Activated T-helper 2 cell treated with anti-CD3 and anti-CD28 coated beads, Interferon-gamma antibody, Interleukin-2, Interleukin-4, amounts not matched to agents 10 μg/mL and 5 μg/mL and 100 μg/mL, durations not matched to agents 14 hours and 24 hours and 36 hours (primary cell): ENCODE measurements at regions of chrX and their contacts with region 1.

Region 1: GRCh38 chrX:31099536-31100090 is 27.8 kb upstream of the FTHL17 start:
- DNase-seq: peak; percentile 9
- H3K4me3 Mint-ChIP-seq: no peak overlapping the region
- H3K27ac Mint-ChIP-seq: no peak overlapping the region
- H3K4me1 Mint-ChIP-seq: peaks cover 2% of the 10 kb centered on the region
- H3K27me3 Mint-ChIP-seq: peaks cover 2% of the 10 kb centered on the region

Region 2: GRCh38 chrX:30652527-30653414 is 446.8 kb before region 1 on chrX:
- intact Hi-C with region 1: loop called (anchors 5 kb)
- DNase-seq: peak; percentile 89
- H3K4me3 Mint-ChIP-seq: peak overlapping the region; percentile 94
- H3K27ac Mint-ChIP-seq: peak overlapping the region; percentile 98
- H3K4me1 Mint-ChIP-seq: peaks cover 42% of the 10 kb centered on the region
- H3K27me3 Mint-ChIP-seq: no peaks in the 10 kb centered on the region

Region 3: GRCh38 chrX:30992381-30992904 is 107.2 kb before region 1 on chrX:
- intact Hi-C with region 1: loop called (anchors 10 kb)
- DNase-seq: no peak
- H3K4me3 Mint-ChIP-seq: no peak overlapping the region
- H3K27ac Mint-ChIP-seq: no peak overlapping the region
- H3K4me1 Mint-ChIP-seq: peaks cover 21% of the 10 kb centered on the region
- H3K27me3 Mint-ChIP-seq: peaks cover 9% of the 10 kb centered on the region

Region 4: GRCh38 chrX:31057291-31057690 is 42.3 kb before region 1 on chrX:
- intact Hi-C with region 1: loop called (anchors 1 kb)
- DNase-seq: no peak
- H3K4me3 Mint-ChIP-seq: no peak overlapping the region
- H3K27ac Mint-ChIP-seq: no peak overlapping the region
- H3K4me1 Mint-ChIP-seq: no peaks in the 10 kb centered on the region
- H3K27me3 Mint-ChIP-seq: peaks cover 4% of the 10 kb centered on the region

Region 5: GRCh38 chrX:31136144-31136611 is 36.6 kb after region 1 on chrX:
- intact Hi-C with region 1: loop called (anchors 1 kb)
- DNase-seq: no peak
- H3K4me3 Mint-ChIP-seq: peak overlapping the region; percentile 5
- H3K27ac Mint-ChIP-seq: no peak overlapping the region
- H3K4me1 Mint-ChIP-seq: peaks cover 18% of the 10 kb centered on the region
- H3K27me3 Mint-ChIP-seq: no peaks in the 10 kb centered on the region